A549 (cell line): ENCODE measurements at regions of chr7 and their contacts with region 1.

Region 1: DNA sequence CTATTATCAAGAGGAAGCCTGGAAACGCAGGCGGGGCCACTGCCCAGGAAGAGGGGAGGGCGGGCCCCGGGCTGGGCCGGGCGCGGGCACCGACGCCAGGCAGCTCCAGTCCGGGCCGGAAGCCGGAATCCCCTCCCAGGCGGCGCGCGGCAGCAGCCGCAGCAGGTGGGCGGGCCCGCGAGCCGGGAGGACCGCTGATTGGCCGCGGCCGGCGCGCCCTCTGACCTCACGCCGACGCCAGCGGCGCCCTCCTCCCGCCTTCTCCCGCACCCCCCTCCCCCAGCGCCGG is 438 bp downstream of the BCL7B start:
- DNase-seq: peak; percentile 92 to 93
- ATAC-seq: peak; percentile 89 to 94
- H3K4me3 ChIP-seq: peak overlapping the region; percentile 90
- H3K27ac ChIP-seq: peak overlapping the region; percentile 99
- H3K4me1 ChIP-seq: peaks cover 25% of the 10 kb centered on the region
- CTCF ChIP-seq: no peak
- EP300 ChIP-seq: no peak
- POLR2A ChIP-seq: no peak; the same call in 1 of the 2 replicates
- RAD21 ChIP-seq: no peak

Region 2: GRCh38 chr7:73578342-73579127 is 21.5 kb after region 1 on chr7 and contains the start of gene TBL2:
- CTCF ChIA-PET with region 1: interaction called, 3 read pairs
- POLR2A ChIA-PET with region 1: interaction called, 18 read pairs
- DNase-seq: peak; percentile 99
- ATAC-seq: peak; percentile 94 to 96
- H3K4me3 ChIP-seq: peak within 1 kb of the TSS; percentile 82
- H3K27ac ChIP-seq: peak within 1 kb of the TSS; percentile 92 to 98
- H3K4me1 ChIP-seq: peaks cover 21% of the 10 kb centered on the region
- CTCF ChIP-seq: no peak; the same call in 2 of the 3 replicates
- EP300 ChIP-seq: no peak
- POLR2A ChIP-seq: peak; percentile 96
- RAD21 ChIP-seq: no peak
- polyA plus RNA-seq, gene TBL2: 34.4 and 38.3 TPM in 2 replicates

Region 3: GRCh38 chr7:73971704-73972341 is 414.8 kb after region 1 on chr7:
- CTCF ChIA-PET with region 1: no interaction called
- POLR2A ChIA-PET with region 1: no interaction called
- DNase-seq: peak in 1 of 2 experiments; percentile 16
- ATAC-seq: peak; percentile 47 to 61; a peak in 5 of 6 replicates
- H3K4me3 ChIP-seq: no peak overlapping the region
- H3K27ac ChIP-seq: no peak overlapping the region
- H3K4me1 ChIP-seq: no peaks in the 10 kb centered on the region
- CTCF ChIP-seq: no peak; the same call in 2 of the 3 replicates
- EP300 ChIP-seq: no peak
- POLR2A ChIP-seq: no peak
- RAD21 ChIP-seq: 0 out of 5 replicates have a peak, but pooled peaks of 1 of the 2 experiments have one; percentile 13